H1 (cell line): ENCODE measurements at regions of chr2 and their contacts with region 1.

Region 1: DNA sequence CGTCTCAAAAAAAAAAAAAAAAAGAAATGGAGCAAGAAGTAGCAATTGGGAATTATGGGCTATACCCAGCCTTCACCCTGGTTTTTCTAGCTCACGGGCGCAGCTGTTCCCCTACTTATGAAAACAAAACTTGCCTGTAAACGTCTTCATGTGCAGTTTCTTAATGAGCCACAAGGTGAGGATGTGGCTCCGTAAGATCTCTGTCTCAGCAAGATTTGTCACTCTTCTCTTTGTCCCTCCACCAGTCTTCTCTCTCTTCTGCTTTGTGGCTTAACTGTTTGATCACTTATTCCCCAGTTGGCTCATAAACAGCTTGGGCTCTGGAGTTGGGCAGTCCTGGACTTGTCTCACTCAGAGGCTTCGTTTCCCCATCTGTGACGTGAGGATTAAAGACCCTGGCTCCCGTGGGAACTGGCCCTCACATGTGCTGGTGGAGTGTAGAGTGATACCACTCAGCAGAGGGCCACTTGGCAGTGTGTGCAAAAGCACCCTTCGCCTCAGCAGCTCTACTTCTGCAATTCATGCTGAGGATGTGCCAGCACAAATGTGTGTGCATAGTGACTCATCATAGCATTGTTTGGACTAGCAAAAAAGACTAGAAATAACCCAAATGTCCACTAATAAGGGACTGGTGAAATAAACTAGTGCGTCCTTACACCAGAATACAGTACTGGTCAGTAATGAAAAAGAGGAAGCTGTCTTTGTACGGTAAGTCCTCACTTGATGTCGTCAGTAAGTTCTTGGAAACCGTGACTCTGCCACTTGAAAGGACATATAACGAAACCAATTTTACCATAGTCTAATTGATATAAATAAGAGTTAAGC is 8.7 kb downstream of the CEP68 start:
- DNase-seq: no peak
- H3K4me3 ChIP-seq: no peak overlapping the region
- H3K27ac ChIP-seq: no peak overlapping the region
- H3K4me1 ChIP-seq: no peaks in the 10 kb centered on the region
- H3K27me3 ChIP-seq: no peaks in the 10 kb centered on the region
- CTCF ChIP-seq: peak in 2 of 3 experiments; percentile 69 to 76; a peak in 3 of 4 replicates
- EP300 ChIP-seq: no peak
- POLR2A ChIP-seq: no peak
- RAD21 ChIP-seq: peak; percentile 75 to 83

Region 2: GRCh38 chr2:64852771-64853705 is 211.9 kb before region 1 on chr2:
- CTCF ChIA-PET with region 1: no interaction called
- POLR2A ChIA-PET with region 1: no interaction called
- DNase-seq: no peak
- H3K4me3 ChIP-seq: no peak overlapping the region
- H3K27ac ChIP-seq: no peak overlapping the region
- H3K4me1 ChIP-seq: peaks cover 0 to 9% (median 4%) of the 10 kb centered on the region in 4 experiments; a peak in 5 of 7 replicates
- H3K27me3 ChIP-seq: peaks cover 0 to 11% (median 5%) of the 10 kb centered on the region in 4 experiments; a peak in 4 of 7 replicates
- CTCF ChIP-seq: no peak
- EP300 ChIP-seq: no peak
- POLR2A ChIP-seq: no peak
- RAD21 ChIP-seq: no peak

Region 3: DNA sequence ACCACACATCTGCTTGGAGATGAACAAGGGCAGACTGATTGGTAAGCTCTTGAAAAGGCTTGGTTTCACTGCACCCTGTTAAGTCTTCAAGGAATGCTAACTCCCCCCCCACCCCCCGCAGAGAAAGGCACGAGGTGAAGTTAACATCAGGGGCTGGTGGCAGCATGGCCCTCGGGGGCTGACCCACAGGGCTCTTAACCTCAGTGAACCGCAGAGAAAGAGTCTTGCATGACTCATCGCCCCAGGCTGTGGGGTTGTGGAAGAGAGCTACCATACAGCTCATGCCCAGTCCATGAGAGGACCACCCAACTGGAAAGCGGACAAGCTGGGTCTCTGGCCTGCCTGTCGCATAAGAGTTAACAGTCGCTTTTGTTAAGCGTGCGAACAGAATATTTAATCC is 19.3 kb before region 1 on chr2:
- CTCF ChIA-PET with region 1: interaction called, 16 read pairs
- POLR2A ChIA-PET with region 1: interaction called, 84 read pairs
- DNase-seq: peak in 1 of 2 experiments; percentile 70
- H3K4me3 ChIP-seq: peak overlapping the region in 1 of 4 experiments; percentile 9; a peak in 1 of 8 replicates
- H3K27ac ChIP-seq: no peak overlapping the region
- H3K4me1 ChIP-seq: peaks cover 5 to 13% (median 8%) of the 10 kb centered on the region in 4 experiments; a peak in 6 of 7 replicates
- H3K27me3 ChIP-seq: no peaks in the 10 kb centered on the region
- CTCF ChIP-seq: no peak
- EP300 ChIP-seq: no peak
- POLR2A ChIP-seq: no peak
- RAD21 ChIP-seq: no peak

Region 4: GRCh38 chr2:65075605-65076344 is 10.8 kb after region 1 on chr2:
- CTCF ChIA-PET with region 1: interaction called, 26 read pairs
- POLR2A ChIA-PET with region 1: interaction called, 11 read pairs
- DNase-seq: peak in 1 of 2 experiments; percentile 13
- H3K4me3 ChIP-seq: no peak overlapping the region
- H3K27ac ChIP-seq: no peak overlapping the region
- H3K4me1 ChIP-seq: peaks cover 0 to 18% (median 5%) of the 10 kb centered on the region in 4 experiments
- H3K27me3 ChIP-seq: no peaks in the 10 kb centered on the region
- CTCF ChIP-seq: no peak
- EP300 ChIP-seq: no peak
- POLR2A ChIP-seq: no peak
- RAD21 ChIP-seq: no peak